Heart left ventricle (tissue), 16 donors: ENCODE measurements at regions of chr12 and their contacts with region 1.

Region 1: GRCh38 chr12:53514628-53515290 is 7.5 kb upstream of the NPFF start:
- DNase-seq: no peak
- ATAC-seq: no peak
- H3K4me3 ChIP-seq: no peak overlapping the region
- H3K27ac ChIP-seq: no peak overlapping the region
- H3K4me1 ChIP-seq: no peaks in the 10 kb centered on the region
- H3K27me3 ChIP-seq: no peaks in the 10 kb centered on the region
- CTCF ChIP-seq: no peak
- POLR2A ChIP-seq: no peak

Region 2: DNA sequence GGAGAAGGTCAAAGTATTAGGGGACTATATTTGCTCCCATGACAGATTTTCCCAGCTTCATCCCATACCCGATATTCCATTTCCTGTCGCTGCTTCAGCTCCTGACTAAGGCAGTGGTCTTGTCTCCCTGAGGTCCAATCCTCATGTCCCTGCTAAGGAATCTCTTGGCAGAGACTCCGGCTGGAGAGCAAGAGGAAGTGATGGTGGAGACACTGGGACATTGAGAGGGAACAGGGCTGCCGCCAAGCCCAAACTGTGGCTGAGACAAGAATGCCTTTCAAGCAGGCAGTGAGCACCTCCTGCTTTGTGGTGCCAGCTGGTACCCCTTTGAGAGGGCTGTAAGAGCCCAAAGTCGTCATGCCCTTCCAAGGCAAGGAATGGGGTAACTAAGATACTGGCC is 184.1 kb before region 1 on chr12:
- intact Hi-C with region 1: loop called in 7 of 10 experiments (anchors 2 to 10 kb)
- DNase-seq: no peak
- ATAC-seq: no peak
- H3K4me3 ChIP-seq: no peak overlapping the region
- H3K27ac ChIP-seq: peak overlapping the region in 2 of 12 donors; percentile 17 to 44
- H3K4me1 ChIP-seq: peaks cover 0 to 7% (median 4%) of the 10 kb centered on the region in 12 donors
- H3K27me3 ChIP-seq: peaks cover 0 to 20% (median 0%) of the 10 kb centered on the region in 9 donors
- CTCF ChIP-seq: no peak
- POLR2A ChIP-seq: no peak